Breast epithelium (tissue), 4 donors: ENCODE measurements at regions of chrX and their contacts with region 1.

Region 1: DNA sequence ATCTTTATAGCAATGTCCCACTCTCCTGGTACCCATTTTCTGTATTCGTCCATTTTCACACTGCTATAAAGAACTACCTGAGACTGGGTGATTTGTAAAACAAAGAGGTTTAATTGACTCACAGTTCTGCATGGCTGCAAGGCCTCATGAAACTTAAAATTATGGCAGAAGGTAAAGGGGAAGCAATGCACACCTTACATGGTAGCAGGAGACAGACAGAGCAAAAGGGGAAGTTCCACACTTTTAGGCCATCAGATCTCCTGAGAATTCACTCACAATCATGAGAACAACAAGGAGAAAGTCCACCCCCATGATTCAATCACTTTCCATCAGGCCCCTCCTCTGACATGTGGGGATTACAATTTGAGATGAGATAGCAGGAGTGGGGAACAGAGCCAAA is 49.7 kb downstream of the TMLHE start:
- DNase-seq: no peak
- H3K4me3 ChIP-seq: no peak overlapping the region
- H3K27ac ChIP-seq: no peak overlapping the region
- H3K4me1 ChIP-seq: no peaks in the 10 kb centered on the region
- H3K27me3 ChIP-seq: no peaks in the 10 kb centered on the region
- CTCF ChIP-seq: no peak
- POLR2A ChIP-seq: no peak

Region 2: DNA sequence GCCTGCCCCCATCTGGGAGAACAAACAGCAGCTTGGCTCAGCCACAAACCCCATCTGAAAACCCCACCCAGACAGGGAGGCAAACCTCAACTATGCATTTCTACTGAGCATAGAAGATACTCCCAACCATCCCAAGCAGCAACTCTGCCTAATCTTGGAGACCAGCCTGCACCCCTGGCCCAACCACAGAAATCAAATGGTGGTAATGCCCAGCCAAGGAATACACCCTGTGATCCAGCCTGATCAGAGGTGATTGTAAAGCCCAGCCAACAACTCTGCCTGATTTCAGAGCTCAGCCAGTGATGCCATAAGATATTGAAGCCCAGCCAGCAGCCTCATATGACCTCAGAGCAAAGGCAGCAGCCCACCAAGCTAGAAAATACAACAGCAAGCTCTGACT is 29.9 kb after region 1 on chrX:
- intact Hi-C with region 1: loop called (anchors 2 kb)
- DNase-seq: no peak
- H3K4me3 ChIP-seq: no peak overlapping the region
- H3K27ac ChIP-seq: no peak overlapping the region
- H3K4me1 ChIP-seq: no peaks in the 10 kb centered on the region
- H3K27me3 ChIP-seq: no peaks in the 10 kb centered on the region
- CTCF ChIP-seq: no peak
- POLR2A ChIP-seq: no peak